Activated CD4-positive, alpha-beta T cell treated with anti-CD3 and anti-CD28 coated beads, Interleukin-2, amount 10 ng/mL, durations not matched to agents 7 days and 5 days (primary cell): ENCODE measurements at regions of chr7 and their contacts with region 1.

Region 1: GRCh38 chr7:127437852-127438251 is 45.3 kb upstream of the ZNF800 start:
- DNase-seq: no peak
- H3K4me3 Mint-ChIP-seq: no peak overlapping the region
- H3K27ac Mint-ChIP-seq: no peak overlapping the region
- H3K4me1 Mint-ChIP-seq: no peaks in the 10 kb centered on the region
- H3K27me3 Mint-ChIP-seq: peaks cover 19% of the 10 kb centered on the region

Region 2: DNA sequence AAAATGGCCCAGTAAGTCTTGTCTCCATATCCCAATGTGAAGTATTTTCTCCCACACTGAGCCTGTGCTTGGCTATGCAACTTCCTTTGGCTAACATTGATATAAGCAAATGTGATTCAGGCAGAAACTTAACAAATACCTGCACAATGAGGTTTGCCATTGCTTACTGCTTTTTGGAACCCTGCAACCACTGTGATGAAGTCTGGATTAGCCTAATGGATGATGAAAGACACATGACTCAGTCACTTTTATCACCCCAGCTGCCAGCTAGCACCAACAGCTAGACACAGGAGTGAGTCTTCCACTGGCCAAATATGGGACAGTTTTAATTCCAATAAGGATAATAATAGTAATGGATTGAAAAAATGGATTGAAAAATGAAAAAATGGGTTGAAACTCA is 1039.6 kb before region 1 on chr7:
- CTCF ChIA-PET with region 1: no interaction called
- POLR2A ChIA-PET with region 1: interaction called, 14 read pairs
- DNase-seq: no peak
- H3K4me3 Mint-ChIP-seq: no peak overlapping the region
- H3K27ac Mint-ChIP-seq: no peak overlapping the region
- H3K4me1 Mint-ChIP-seq: no peaks in the 10 kb centered on the region
- H3K27me3 Mint-ChIP-seq: no peaks in the 10 kb centered on the region